WTC11 (cell line): ENCODE measurements at regions of chr9 and their contacts with region 1.

Region 1: DNA sequence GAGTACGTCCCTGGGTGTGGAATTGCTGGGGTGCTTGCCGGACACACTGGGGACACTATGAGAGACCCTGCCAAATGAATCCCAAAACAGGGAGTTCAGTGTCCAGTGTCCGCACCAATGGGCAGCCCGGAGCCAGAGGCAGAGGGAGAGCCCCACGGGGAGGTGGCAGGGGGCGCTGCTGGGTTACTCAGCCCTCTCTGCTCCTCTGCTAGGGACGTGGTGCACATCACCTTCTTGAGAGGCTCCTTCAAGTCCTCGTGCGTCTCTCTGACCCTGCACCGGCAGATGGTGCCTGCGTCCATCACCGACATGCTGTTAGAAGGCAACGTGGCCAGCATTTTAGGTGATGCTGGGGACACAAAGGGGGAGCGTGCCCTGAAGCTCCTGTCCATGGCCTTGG is 20.8 kb downstream of the STKLD1 start:
- DNase-seq: peak; percentile 82
- ATAC-seq: peak; percentile 90
- H3K4me3 Mint-ChIP-seq: no peak overlapping the region
- H3K27ac Mint-ChIP-seq: no peak overlapping the region
- H3K4me1 Mint-ChIP-seq: no peaks in the 10 kb centered on the region
- H3K27me3 Mint-ChIP-seq: peaks cover 6% of the 10 kb centered on the region
- CTCF ChIP-seq: peak; percentile 24; the same call in 1 of the 2 replicates

Region 2: GRCh38 chr9:133384736-133385321 is 12.1 kb before region 1 on chr9:
- CTCF ChIA-PET with region 1: interaction called, 13 read pairs
- POLR2A ChIA-PET with region 1: no interaction called
- DNase-seq: no peak
- ATAC-seq: no peak
- H3K4me3 Mint-ChIP-seq: no peak overlapping the region
- H3K27ac Mint-ChIP-seq: no peak overlapping the region
- H3K4me1 Mint-ChIP-seq: no peaks in the 10 kb centered on the region
- H3K27me3 Mint-ChIP-seq: peaks cover 4% of the 10 kb centered on the region
- CTCF ChIP-seq: no peak